ENCODE measurements at regions of chr17 and their contacts with region 1.

Region 1: GRCh38 chr17:64420143-64420971 is 28.6 kb upstream of the MILR1 start:
- DNase-seq: peak in 5 of 9 experiments; percentile 27 to 85 (median 62)
- ATAC-seq: peak; percentile 88
- H3K4me3 ChIP-seq: no peak overlapping the region
- H3K4me3 Mint-ChIP-seq: no peak overlapping the region
- H3K27ac ChIP-seq: no peak overlapping the region
- H3K27ac Mint-ChIP-seq: no peak overlapping the region
- H3K4me1 ChIP-seq: peaks cover 4% of the 10 kb centered on the region
- H3K4me1 Mint-ChIP-seq: peaks cover 2% of the 10 kb centered on the region
- H3K27me3 ChIP-seq: no peaks in the 10 kb centered on the region
- H3K27me3 Mint-ChIP-seq: no peaks in the 10 kb centered on the region
- CTCF ChIP-seq: peak; percentile 80

Region 2: DNA sequence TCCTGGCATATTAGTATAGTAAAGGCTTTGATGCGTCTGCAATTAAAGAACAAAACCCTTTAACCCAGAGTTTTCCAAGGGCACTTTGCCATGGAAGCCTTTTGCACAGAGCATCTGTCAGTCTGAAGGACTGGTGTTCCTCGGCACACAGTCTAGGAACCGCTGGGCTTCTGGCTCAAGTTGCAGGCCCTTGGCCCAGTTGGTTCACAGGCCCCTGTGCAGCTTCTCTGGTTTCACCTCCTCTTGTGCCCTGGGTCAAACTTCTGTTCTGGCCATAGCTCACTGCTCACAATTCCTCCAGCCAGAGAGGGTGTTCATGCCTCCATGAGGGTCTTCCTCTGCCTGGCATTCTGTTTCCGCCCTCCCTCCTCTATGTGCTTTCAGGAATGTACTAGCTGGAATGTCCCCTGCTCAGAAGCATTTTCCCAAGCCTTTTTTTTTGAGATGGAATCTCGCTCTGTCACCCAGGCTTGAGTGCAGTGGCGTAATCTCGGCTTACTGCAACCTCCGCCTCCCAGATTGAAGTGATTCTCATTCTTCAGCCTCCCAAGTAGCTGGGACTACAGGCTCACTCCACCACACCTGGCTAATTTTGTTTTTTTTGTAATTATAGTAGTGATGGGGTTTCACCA is 122.8 kb before region 1 on chr17:
- CTCF ChIA-PET with region 1: interaction called, 91 read pairs
- POLR2A ChIA-PET with region 1: no interaction called
- intact Hi-C with region 1: no loop called
- DNase-seq: no peak
- ATAC-seq: no peak
- H3K4me3 ChIP-seq: no peak overlapping the region
- H3K4me3 Mint-ChIP-seq: no peak overlapping the region
- H3K27ac ChIP-seq: no peak overlapping the region
- H3K27ac Mint-ChIP-seq: no peak overlapping the region
- H3K4me1 ChIP-seq: no peaks in the 10 kb centered on the region
- H3K4me1 Mint-ChIP-seq: no peaks in the 10 kb centered on the region
- H3K27me3 ChIP-seq: no peaks in the 10 kb centered on the region
- H3K27me3 Mint-ChIP-seq: no peaks in the 10 kb centered on the region
- CTCF ChIP-seq: no peak

Region 3: DNA sequence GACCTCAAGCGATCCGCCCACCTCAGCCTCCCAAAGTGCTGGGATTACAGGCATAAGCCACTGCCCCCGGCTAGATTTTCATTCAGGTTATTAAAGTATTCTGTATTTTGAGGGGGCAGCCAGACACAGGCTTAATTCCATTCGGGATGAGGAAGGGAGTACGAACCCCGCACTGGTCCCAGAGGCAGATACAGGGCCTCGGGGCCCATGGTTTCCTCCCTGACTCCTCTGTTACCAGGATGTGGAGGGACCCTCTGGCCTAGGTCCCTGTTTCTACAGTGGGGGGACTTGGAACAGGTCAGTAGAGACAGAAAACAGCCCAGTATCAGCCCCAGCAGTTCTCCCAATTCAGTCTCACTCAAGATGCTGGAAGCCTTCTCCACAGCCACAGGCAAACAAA is 71.7 kb before region 1 on chr17:
- CTCF ChIA-PET with region 1: interaction called, 36 read pairs
- POLR2A ChIA-PET with region 1: interaction called, 3 read pairs
- intact Hi-C with region 1: no loop called
- DNase-seq: no peak
- ATAC-seq: no peak
- H3K4me3 ChIP-seq: no peak overlapping the region
- H3K4me3 Mint-ChIP-seq: no peak overlapping the region
- H3K27ac ChIP-seq: peak overlapping the region in 1 of 2 experiments; percentile 40
- H3K27ac Mint-ChIP-seq: peak overlapping the region; percentile 98
- H3K4me1 ChIP-seq: peaks cover 34% of the 10 kb centered on the region
- H3K4me1 Mint-ChIP-seq: peaks cover 37% of the 10 kb centered on the region
- H3K27me3 ChIP-seq: no peaks in the 10 kb centered on the region
- H3K27me3 Mint-ChIP-seq: no peaks in the 10 kb centered on the region
- CTCF ChIP-seq: no peak

Region 4: DNA sequence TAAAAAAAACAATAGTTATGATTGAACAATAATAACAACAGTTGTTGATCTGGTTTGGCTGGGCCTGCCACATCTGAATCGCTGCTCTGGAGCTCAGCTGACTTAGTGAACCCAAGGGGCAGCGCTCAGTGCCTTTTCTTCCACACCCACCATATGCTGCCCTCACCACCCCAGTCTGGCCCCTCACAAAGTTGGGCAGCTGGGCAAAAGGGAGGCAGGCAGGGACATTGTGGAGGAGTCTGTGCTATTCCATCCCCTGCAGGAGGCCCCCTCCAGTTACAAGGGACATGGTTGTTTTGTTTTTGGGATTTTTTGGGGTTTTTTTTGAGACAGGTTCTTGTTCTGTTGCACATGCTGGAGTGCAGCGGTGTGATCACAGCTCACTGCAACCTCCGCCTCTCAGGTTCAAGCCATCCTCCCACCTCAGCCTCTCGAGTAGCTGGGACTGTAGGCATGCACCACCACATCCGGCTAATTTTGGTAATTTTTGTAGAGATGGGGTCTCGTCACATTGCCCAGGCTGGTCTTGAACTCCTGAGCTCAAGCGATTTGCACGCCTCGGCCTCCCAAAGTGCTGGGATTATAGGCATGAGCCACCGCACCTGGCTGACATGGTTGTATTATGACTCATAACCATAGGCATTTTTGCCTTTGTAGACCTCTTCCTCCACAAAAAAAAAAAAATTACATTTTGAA is 21.1 kb before region 1 on chr17:
- CTCF ChIA-PET with region 1: interaction called, 119 read pairs
- POLR2A ChIA-PET with region 1: interaction called, 5 read pairs
- intact Hi-C with region 1: no loop called
- DNase-seq: peak in 2 of 9 experiments; percentile 26 to 30
- ATAC-seq: no peak
- H3K4me3 ChIP-seq: no peak overlapping the region
- H3K4me3 Mint-ChIP-seq: peak overlapping the region; percentile 42
- H3K27ac ChIP-seq: peak overlapping the region in 1 of 2 experiments; percentile 40
- H3K27ac Mint-ChIP-seq: peak overlapping the region; percentile 64
- H3K4me1 ChIP-seq: peaks cover 57% of the 10 kb centered on the region
- H3K4me1 Mint-ChIP-seq: peaks cover 50% of the 10 kb centered on the region
- H3K27me3 ChIP-seq: no peaks in the 10 kb centered on the region
- H3K27me3 Mint-ChIP-seq: no peaks in the 10 kb centered on the region
- CTCF ChIP-seq: no peak

Region 5: DNA sequence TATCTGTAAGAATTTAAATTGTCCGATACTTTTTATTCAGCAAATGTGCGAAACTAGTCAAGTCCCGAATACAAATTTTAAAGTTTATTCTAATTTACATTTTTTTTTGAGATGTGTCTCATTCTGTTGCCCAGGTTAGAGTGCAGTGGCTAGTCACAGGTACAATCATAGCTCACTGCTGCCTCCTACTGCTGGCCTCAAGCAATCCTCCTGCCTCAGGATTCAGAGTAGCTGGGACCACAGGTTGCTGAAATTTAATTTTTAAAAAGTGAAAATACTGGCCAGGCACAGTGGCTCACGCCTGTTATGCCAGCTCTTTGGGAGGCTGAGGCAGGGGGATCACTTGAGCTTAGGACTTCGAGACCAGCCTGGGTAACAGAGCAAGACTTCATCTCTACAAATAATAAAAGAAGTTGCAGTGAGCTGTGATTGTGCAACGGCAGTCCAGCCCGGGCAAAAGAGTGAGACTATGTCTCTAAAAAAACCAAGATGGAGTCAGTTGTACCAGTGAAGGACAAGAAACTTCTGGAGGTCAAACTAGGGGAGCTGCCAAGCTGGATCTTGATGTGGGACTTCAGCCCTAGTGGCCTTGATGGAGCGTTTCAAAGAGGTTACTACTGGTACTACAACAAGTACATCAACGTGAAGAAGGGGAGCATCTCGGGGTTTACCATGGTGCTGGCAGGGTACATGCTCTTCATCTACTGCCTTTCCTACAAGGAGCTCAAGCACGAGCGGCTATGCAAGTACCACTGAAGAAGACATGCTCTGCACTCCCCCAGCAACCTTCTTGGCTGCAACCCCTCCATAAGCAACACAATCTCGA is 70.9 kb after region 1 on chr17:
- CTCF ChIA-PET with region 1: interaction called, 246 read pairs
- POLR2A ChIA-PET with region 1: interaction called, 14 read pairs
- intact Hi-C with region 1: loop called (anchors 1 kb)
- DNase-seq: peak in 8 of 9 experiments; percentile 27 to 71 (median 53)
- ATAC-seq: peak; percentile 76
- H3K4me3 ChIP-seq: no peak overlapping the region
- H3K4me3 Mint-ChIP-seq: no peak overlapping the region
- H3K27ac ChIP-seq: no peak overlapping the region
- H3K27ac Mint-ChIP-seq: no peak overlapping the region
- H3K4me1 ChIP-seq: peaks cover 15% of the 10 kb centered on the region
- H3K4me1 Mint-ChIP-seq: peaks cover 34% of the 10 kb centered on the region
- H3K27me3 ChIP-seq: no peaks in the 10 kb centered on the region
- H3K27me3 Mint-ChIP-seq: no peaks in the 10 kb centered on the region
- CTCF ChIP-seq: peak; percentile 74

Region 6: GRCh38 chr17:64599187-64599676 is 178.9 kb after region 1 on chr17:
- CTCF ChIA-PET with region 1: interaction called, 15 read pairs
- POLR2A ChIA-PET with region 1: no interaction called
- intact Hi-C with region 1: no loop called
- DNase-seq: peak; percentile 13 to 77 (median 60)
- ATAC-seq: peak; percentile 95
- H3K4me3 ChIP-seq: peak overlapping the region in 1 of 2 experiments; percentile 2
- H3K4me3 Mint-ChIP-seq: peak overlapping the region; percentile 72
- H3K27ac ChIP-seq: peak overlapping the region in 1 of 2 experiments; percentile 69
- H3K27ac Mint-ChIP-seq: peak overlapping the region; percentile 94
- H3K4me1 ChIP-seq: peaks cover 16% of the 10 kb centered on the region
- H3K4me1 Mint-ChIP-seq: peaks cover 42% of the 10 kb centered on the region
- H3K27me3 ChIP-seq: no peaks in the 10 kb centered on the region
- H3K27me3 Mint-ChIP-seq: no peaks in the 10 kb centered on the region
- CTCF ChIP-seq: no peak

Measured in CD8-positive, alpha-beta T cell (primary cell).